ENCODE measurements at regions of chr11 and their contacts with region 1.

Region 1: DNA sequence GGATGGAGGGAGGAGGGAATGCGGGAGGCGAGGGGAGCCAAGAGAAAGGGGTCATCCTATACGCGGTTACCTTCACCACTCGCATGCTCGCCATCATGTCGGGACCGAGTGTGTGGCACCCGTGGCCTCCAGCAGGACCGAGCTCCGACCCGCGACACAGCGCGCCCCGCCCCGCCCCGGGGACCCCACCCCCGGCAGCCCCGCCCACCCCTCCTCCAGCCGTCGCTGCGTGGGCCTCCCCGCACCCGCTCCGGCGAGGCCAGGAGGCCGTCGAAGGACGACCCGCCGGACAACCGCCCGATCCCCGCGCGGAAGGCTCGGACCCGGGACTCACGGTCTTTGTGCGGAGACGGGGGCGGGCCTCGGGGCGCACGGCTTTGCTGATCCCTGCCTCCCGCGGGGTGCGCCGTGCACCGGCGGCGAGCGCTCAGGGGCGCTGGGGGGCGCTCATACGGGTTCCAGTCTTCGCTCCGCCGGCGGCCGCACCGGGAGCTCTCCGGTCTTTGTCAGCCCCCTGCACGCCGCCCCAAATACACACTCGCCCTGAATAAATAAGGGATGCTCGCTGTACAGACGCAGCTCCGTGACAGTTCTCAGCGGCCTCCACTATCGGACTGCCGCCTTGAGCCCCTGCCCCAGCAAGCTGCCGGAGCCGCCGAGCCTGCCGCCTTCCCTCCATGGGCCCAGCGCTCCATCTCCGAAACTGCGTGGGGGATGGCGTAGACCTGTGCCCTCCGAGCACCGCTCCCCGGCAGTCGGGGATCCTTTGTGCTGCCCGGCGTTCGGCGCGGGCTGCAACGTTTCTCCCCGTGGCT is at the start of gene UBE2L6:
- DNase-seq: peak; percentile 66
- H3K4me3 Mint-ChIP-seq: peak within 1 kb of the TSS; percentile 97
- H3K27ac Mint-ChIP-seq: peak within 1 kb of the TSS; percentile 96
- H3K4me1 Mint-ChIP-seq: peaks cover 39% of the 10 kb centered on the region
- H3K27me3 Mint-ChIP-seq: no peaks in the 10 kb centered on the region
- total RNA-seq, gene UBE2L6: 187 to 194 TPM

Region 2: GRCh38 chr11:57335343-57336110 is 232.2 kb before region 1 on chr11 and contains the start of gene SSRP1:
- CTCF ChIA-PET with region 1: no interaction called
- intact Hi-C with region 1: loop called (anchors 2 kb)
- DNase-seq: peak; percentile 93
- H3K4me3 Mint-ChIP-seq: peak within 1 kb of the TSS; percentile 91
- H3K27ac Mint-ChIP-seq: peak within 1 kb of the TSS; percentile 99
- H3K4me1 Mint-ChIP-seq: peaks cover 41% of the 10 kb centered on the region
- H3K27me3 Mint-ChIP-seq: no peaks in the 10 kb centered on the region
- total RNA-seq, gene SSRP1: 304 to 322 TPM

Region 3: GRCh38 chr11:57426929-57427726 is 140.6 kb before region 1 on chr11 and contains the start of gene SLC43A3:
- CTCF ChIA-PET with region 1: no interaction called
- intact Hi-C with region 1: loop called (anchors 1 kb)
- DNase-seq: peak; percentile 84
- H3K4me3 Mint-ChIP-seq: peak within 1 kb of the TSS; percentile 95
- H3K27ac Mint-ChIP-seq: peak within 1 kb of the TSS; percentile 96
- H3K4me1 Mint-ChIP-seq: peaks cover 33% of the 10 kb centered on the region
- H3K27me3 Mint-ChIP-seq: no peaks in the 10 kb centered on the region
- total RNA-seq, gene SLC43A3: 116 to 117 TPM

Region 4: DNA sequence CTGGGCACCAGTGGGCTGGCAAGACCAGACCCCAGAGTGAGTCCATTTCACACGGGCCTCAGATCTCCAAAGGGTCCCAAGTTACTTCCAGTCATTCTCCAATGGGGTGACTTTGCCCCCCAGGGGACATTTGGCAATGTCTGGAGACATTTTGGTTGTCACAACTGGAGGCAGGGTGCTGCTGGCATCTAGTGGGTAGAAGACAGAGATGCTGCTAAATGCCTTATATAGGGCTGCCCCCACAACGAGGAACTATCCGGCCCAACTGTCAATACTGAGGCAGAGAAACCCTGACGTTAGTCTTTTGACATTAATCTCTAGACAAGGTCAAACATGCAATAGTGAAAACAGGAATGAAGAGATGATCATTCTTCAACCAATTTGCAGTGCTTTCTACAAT is 101.0 kb before region 1 on chr11:
- CTCF ChIA-PET with region 1: no interaction called
- intact Hi-C with region 1: no loop called
- DNase-seq: no peak
- H3K4me3 Mint-ChIP-seq: no peak overlapping the region
- H3K27ac Mint-ChIP-seq: no peak overlapping the region
- H3K4me1 Mint-ChIP-seq: no peaks in the 10 kb centered on the region
- H3K27me3 Mint-ChIP-seq: peaks cover under 1% of the 10 kb centered on the region

Region 5: GRCh38 chr11:57644748-57645688 is 77.3 kb after region 1 on chr11:
- CTCF ChIA-PET with region 1: interaction called, 258 read pairs
- intact Hi-C with region 1: loop called (anchors 1 kb)
- DNase-seq: peak; percentile 94
- H3K4me3 Mint-ChIP-seq: no peak overlapping the region
- H3K27ac Mint-ChIP-seq: no peak overlapping the region
- H3K4me1 Mint-ChIP-seq: peaks cover 35% of the 10 kb centered on the region
- H3K27me3 Mint-ChIP-seq: peaks cover 39% of the 10 kb centered on the region

Region 6: DNA sequence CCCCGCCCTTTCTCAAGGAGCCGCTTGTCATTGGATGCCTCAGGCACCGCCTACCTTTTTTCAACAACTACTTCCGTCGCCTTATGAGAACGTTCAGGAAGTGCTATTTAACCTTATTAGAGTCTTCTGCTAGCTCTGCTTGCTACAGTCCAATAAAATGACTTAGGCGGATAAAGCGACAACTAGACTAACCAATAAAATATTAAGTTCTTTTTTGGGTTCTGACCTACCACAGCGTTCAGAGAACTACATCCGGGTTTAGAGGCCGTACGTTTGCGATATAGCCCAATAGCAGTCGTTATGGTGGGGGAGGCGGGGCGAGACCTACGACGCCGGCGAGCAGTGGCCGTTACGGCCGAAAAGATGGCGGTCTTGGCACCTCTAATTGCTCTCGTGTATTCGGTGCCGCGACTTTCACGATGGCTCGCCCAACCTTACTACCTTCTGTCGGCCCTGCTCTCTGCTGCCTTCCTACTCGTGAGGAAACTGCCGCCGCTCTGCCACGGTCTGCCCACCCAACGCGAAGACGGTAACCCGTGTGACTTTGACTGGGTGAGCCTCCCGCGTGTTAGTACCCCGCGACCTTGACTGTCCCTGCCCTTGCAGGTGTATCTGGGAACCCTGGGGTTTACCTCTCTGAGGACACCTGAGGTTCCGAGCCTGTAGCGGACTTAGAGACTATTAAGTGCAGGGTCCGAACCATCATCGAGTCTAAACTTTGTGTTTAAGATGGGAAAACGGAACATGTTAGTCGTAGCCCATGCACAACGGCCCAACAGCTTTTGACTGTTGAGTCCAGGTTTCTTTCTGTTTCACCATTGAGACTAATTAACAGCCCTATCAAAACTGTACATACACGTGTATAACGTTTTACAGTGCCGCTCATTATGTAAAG is 144.8 kb after region 1 on chr11 and contains the start of gene TMX2:
- CTCF ChIA-PET with region 1: no interaction called
- intact Hi-C with region 1: loop called (anchors 1 kb)
- DNase-seq: peak; percentile 95
- H3K4me3 Mint-ChIP-seq: peak within 1 kb of the TSS; percentile 99
- H3K27ac Mint-ChIP-seq: peak within 1 kb of the TSS; percentile 92
- H3K4me1 Mint-ChIP-seq: peaks cover 50% of the 10 kb centered on the region
- H3K27me3 Mint-ChIP-seq: no peaks in the 10 kb centered on the region
- total RNA-seq, gene TMX2: 49.8 to 54.7 TPM

Region 7: DNA sequence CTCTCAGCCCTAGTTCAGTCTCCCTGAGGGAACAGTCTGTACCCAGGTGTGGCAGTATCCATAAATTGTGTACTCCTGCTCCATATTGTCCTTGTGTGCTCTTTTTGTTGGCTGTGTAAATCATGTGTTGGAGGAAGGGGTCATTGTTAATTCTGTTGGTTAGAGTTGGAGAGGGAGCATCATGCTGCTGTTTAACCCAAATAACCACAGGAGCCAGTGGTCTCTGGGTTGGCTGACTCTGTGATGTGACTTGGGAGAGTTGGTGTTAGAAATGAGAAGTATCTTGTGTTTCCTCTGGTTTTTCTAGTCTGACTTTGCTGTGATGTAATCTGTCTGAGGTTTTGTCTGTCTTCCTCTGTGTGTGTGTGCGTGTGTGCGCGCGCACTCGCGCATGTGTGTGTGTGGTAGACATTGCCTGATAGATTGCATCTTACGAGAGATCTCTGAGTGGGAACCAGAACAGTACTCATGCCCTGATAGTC is 224.4 kb after region 1 on chr11:
- CTCF ChIA-PET with region 1: no interaction called
- intact Hi-C with region 1: loop called (anchors 2 kb)
- DNase-seq: peak; percentile 87
- H3K4me3 Mint-ChIP-seq: peak overlapping the region; percentile 59
- H3K27ac Mint-ChIP-seq: peak overlapping the region; percentile 94
- H3K4me1 Mint-ChIP-seq: peaks cover 34% of the 10 kb centered on the region
- H3K27me3 Mint-ChIP-seq: no peaks in the 10 kb centered on the region

Region 8: DNA sequence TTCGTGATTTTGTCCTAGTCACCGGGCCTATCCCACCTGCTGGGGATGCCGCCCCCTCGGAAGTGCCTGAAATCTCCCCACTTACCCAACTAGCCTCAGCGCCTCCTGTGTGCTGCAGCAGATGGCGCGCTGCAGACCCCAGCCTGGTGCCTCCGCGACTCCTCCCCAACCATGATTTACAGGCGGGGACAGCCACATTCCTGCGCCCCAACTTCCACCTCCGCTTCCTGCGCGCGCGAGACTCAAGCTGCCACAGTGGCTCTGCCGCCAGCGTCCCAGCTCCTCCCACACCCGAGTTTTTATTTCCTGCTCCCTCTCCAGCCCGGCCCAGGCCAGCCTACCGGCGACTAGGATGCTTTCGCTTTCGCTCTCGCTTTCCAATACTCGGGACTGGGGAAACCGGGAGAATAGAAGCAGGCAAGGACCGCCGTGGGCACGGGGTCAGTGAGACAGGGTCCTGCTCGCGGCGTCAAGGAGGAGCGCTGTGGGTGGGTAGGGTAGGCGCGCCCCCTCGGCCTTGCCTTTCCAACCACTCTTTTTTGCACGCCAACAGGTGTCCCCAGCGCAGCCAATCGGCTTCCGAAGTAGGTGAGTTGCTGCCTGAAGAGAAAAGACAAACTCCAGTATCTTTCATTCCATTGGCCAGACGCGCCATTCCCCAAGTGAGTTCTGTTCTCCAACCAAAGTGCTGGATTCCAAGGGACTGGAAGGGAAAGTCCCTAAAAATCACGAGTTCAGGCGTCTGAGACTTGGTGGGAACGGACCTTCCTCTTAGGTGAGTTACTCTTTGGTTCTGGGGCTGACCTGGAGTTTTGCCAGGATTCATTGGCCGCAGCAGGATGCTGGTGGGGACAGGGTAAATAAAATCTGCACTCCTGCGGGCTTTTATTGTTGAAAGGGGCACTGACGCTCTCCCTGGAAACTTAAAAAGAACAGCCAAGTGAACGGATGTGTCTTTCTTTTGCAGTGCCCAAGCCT is 1575.1 kb after region 1 on chr11 and contains the start of gene FAM111A:
- CTCF ChIA-PET with region 1: no interaction called
- intact Hi-C with region 1: loop called (anchors 5 kb)
- DNase-seq: peak; percentile 88
- H3K4me3 Mint-ChIP-seq: peak within 1 kb of the TSS; percentile 95
- H3K27ac Mint-ChIP-seq: peak within 1 kb of the TSS; percentile 91
- H3K4me1 Mint-ChIP-seq: peaks cover 40% of the 10 kb centered on the region
- H3K27me3 Mint-ChIP-seq: no peaks in the 10 kb centered on the region
- total RNA-seq, gene FAM111A: 98.3 to 99.4 TPM

Measured in activated naive CD4-positive, alpha-beta T cell treated with anti-CD3 and anti-CD28 coated beads for 36 hours (primary cell).